ENCODE measurements at regions of chr4 and their contacts with region 1.

Region 1: DNA sequence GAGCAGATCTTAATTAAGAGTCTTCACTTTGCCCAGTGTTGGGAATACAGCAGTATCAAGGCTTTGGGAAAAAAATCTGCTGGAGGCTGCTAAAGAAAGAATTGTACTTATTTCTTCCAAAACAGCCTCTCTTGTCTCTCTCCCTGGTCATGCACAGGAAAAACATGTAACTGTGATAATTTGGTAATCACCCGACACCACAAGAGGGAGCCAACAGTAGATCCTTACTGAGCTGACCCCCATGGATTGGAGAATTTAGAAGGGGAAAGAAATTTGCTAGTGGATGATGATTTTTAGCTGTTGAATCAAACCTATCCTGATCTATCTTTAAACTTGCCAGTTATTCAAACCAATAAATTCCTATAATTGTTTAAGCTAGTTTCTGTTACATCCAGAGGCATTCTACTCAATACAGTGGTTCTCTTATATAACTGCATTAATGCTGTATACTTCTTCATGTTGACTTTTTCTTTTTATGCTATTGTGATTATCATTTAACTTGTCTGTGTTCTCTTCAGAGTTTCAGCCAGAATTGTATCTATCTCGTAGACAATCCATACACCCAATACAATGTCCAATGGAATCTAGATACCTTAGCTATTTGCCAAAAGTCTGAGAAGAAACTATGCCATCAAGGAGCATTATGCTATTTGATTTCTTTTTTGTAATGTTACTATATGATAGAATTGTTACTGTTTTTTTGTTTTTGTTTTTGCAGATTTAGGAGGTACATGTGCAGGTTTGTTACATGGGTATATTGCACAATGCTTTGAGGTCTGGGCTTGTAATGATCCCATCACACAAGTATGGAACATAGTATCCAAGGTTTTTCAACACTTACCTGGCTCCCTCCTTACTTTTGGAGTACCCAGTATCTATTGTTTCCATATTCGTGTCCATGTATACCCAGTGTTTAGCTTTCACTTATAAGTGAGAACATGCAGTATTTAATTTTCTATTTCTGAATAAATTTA is 31.3 kb upstream of the ARHGEF38 start:
- DNase-seq: no peak
- ATAC-seq: no peak

Region 2: GRCh38 chr4:105490523-105490922 is 30.6 kb before region 1 on chr4:
- intact Hi-C with region 1: no loop called
- DNase-seq: no peak
- ATAC-seq: no peak

Region 3: DNA sequence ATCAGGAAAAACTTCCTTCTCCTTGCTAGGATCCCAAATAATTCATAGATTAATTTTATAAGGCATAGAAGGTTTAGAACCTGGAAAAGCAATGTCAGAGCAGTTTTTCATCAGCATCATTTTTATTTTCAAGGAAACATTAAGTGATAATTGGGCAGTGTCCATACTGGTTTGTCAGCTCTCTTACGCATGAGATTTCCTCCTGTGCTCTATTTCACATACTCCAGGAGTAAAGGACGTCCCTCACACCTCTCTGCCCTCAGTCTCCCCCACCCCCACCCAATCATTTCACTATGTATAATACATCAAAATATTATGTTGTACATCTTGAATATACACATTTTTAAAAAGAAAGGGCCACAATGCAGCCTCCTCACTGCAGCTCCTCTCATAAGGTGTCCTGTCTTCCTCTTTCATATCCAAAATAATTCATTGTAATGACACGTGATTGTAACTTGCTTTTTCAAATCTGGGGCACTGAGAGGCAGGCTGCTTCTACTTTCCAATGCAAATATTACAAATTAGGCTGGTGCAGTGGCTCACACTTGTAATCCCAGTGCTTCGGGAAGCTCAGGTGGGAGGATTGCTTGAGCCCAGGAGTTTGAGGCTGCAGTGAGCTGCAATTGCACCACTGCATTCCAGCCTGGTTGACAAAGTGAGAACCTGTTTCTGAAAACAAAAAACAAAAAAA is 65.7 kb after region 1 on chr4:
- intact Hi-C with region 1: no loop called
- DNase-seq: no peak
- ATAC-seq: no peak

Region 4: DNA sequence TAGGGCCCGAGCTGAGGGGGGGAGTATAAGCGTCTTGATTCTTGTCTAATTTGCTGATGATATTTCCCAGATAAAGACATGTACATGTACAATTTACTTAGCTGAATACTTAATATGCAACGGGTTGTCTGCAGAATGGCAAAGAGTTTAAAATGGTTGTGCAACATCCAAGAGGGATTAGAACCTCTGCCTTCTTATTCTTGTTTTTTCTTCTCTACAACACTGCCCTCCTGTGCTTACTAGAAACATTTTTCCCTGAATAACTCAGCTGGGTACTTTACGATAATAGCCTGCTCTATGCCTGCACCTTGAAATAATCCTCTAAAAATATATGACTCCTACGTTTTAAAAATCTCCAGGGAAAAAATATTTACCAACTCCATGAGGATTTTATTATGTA is 145.6 kb after region 1 on chr4:
- intact Hi-C with region 1: loop called (anchors 2 kb)
- DNase-seq: no peak
- ATAC-seq: peak; percentile 67